GM18951 (cell line): ENCODE measurements at regions of chr15 and their contacts with region 1.

Region 1: DNA sequence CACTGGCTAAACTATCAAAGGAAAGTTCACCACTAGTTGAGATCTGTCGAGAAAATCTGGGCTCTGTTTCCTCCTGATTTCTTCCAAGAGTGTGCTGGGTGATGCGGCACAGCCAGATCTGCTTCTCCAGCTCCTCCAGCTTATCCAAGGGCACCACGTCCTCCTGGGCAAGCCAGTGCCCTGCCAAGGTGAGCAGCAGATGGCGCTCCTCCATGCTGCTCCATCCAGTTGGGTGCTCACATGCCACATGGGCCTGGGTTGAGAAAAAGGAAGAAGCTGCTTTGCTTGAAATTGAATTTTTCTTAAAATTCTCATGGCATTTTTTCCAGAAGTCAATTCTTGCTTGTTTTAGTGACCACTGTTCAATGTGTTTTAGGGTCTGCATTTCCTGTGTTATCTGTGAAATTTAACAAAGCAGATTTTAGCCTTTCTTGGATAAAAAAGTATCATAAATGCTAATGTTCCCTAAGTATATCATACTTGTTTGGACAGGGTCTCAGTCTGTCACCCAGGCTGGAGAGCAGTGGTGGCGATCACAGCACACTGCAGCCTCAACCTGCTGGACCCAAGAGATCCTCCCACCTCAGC is 47.3 kb downstream of the EIF3J start:
- POLR2A ChIP-seq: no peak

Region 2: GRCh38 chr15:44516436-44516835 is 67.8 kb before region 1 on chr15:
- in situ Hi-C with region 1: no loop called
- POLR2A ChIP-seq: no peak

Region 3: GRCh38 chr15:44910981-44911625 is 326.8 kb after region 1 on chr15:
- in situ Hi-C with region 1: loop called (anchors 25 kb)
- POLR2A ChIP-seq: no peak